ENCODE measurements at regions of chr11 and their contacts with region 1.

Region 1: DNA sequence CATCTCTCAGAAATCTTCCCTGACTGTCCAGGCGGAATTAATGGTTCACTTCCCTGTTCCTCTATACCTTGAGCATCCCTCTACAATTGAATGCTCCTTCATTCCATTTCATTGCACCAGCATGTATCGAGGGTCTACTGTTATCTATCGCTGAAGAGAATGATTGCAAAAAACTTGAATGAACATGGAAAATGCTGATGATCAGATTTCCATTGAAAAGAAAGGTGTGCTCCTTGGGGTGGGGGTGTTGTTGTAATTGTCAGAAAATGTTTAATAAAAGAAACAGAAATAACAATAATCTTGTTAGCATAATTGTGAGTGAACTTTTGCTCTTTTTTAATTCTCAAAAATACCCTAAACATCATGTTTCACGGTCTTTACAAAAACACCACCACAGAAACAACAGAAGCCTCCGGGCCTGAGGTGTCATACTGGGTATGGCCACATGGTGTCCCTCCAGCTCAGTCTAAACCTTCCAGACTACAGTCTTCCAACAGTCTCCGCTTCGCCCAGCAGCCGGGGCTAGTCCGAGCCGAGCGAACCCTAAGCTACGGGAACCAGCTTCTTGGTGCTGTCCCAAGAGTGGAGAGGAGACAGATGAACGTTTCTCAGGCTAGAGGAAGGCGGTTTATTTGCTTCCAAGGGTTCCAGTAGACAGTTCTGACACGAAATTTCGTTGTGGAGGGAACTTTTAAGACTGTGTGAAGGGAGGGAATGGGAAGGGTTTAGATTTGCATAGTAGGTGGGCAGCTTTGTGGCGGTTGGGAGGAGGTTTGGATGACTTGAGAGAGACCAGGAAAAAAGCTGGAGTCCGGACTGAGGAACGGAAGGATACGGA is 75.8 kb upstream of the ZBED5 start:
- DNase-seq: peak; percentile 92
- ATAC-seq: peak; percentile 85

Region 2: GRCh38 chr11:10808553-10809372 is 124.9 kb before region 1 on chr11 and contains the start of gene EIF4G2:
- intact Hi-C with region 1: loop called (anchors 5 kb)
- DNase-seq: peak; percentile 99
- ATAC-seq: peak; percentile 97
- total RNA-seq, gene EIF4G2: 714 TPM

Region 3: DNA sequence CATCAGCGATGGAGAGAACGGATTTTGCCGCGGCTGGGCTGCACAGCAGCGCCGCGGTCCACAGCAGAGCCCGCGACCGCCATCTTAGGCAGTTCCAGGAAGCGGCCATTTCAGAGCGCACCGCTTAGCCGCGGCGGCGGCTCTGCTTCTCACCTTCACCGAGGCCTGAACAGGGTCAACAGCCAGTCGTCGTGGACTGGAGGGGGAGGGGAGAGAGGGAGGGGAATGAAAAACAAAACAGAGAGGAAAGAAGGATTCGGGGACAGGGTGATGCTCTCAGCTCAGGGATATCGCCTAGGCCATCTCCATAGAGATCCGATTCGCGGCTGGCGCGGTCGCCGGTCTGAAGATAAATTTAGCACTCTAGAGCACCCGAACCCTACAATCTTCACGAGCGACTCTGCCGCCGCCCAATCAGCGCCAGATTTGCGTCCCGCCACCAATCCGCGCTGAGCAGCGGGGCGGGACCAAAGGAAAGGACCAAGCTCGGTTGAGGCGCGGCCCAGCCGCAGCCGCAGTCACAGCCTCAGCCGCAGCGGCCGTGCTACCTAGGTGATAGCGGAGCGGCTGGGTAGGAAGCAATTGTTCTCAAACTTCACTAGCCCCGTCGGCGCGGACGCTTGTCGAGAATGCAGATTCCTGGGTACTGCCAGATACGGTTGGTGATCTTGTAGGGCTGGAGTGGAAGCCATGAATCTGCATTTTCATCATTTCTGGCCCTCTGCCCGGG is 75.8 kb before region 1 on chr11 and contains the start of gene ZBED5:
- intact Hi-C with region 1: loop called (anchors 5 kb)
- DNase-seq: peak; percentile 99
- ATAC-seq: peak; percentile 97
- total RNA-seq, gene ZBED5: 37.4 TPM

Region 4: DNA sequence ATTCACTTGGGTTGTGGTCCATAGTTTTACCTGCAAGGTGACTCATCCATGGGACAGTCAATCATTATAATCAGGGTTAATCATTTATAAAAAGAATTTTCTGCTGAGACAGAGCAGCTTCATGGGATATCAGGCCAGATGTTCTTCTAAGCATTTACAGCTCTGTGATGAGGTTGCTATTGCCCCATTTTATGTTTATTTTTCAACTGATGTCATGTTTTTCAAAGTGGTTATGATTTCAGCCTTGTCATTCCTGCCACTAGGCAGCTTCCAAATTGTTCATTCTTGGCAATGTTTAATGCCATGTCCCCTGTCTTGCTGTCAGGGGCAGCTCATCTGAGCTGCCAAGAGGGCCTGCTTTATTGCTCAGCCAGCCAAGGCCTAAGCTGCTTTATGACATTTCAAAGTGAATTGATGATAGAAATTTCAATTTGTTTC is 39.9 kb before region 1 on chr11:
- intact Hi-C with region 1: no loop called
- DNase-seq: peak; percentile 40
- ATAC-seq: peak; percentile 81

Region 5: GRCh38 chr11:11022125-11022730 is 88.6 kb after region 1 on chr11:
- intact Hi-C with region 1: loop called (anchors 5 kb)
- DNase-seq: no peak
- ATAC-seq: no peak

Region 6: DNA sequence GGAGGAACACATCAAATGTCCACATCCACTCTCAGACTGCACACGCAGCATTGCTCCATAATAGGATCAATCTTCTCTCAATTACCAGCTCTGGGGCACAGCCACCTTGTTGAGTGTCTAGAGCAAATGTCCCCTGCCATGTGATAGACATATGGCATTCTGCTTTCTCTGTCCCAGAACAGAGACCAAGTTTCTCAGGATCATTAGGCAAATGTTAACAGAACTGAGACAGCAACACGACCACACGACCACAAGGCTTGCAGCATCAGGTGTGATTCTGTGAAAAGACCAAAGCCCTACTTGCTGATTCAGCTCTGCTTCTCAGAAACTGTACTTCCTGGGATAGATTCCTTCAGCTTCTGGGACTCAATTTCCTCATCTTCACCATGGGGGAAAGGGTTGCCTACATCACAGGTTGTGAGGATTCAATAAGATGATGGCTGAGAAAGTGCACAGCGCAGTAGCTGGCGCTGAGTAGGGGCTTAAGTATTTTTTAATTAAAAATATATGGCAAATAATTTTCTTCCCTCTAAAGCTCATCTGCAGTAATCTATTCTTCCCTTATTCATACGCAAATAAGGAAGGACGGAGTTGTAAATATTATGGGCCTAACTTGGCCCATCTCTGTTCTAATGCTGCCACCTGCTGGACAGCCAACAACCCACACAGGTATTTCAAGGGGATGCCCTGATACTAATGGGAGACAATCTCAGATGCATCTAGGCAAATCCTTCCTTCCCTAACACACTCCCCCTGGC is 853.8 kb after region 1 on chr11:
- intact Hi-C with region 1: loop called (anchors 10 kb)
- DNase-seq: peak; percentile 74
- ATAC-seq: peak; percentile 97

Measured in Right ventricle myocardium superior (tissue), 1 donor.